T-cell (primary cell): ENCODE measurements at regions of chr1 and their contacts with region 1.

Region 1: DNA sequence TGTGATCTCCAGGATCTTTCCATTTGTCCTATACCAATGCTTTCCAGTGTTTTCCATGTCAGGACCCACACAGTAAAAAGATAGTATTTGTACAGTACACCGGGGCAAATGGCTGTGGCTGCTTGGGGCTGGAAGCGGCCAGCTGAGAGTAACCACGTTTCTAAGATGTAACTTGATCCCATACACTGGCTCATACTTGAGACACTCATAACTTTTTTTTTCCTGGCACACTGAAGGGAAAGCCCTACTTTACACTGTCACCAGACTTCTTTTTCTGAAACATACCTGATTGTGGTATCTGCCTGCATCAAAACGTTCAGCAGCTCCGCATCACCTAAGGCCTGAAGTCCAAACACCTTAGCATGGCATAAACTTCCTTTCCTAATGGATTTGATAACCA is 21.6 kb downstream of the VPS13D start:
- DNase-seq: no peak
- ATAC-seq: no peak
- H3K4me3 ChIP-seq: no peak overlapping the region
- H3K4me3 Mint-ChIP-seq: no peak overlapping the region
- H3K27ac ChIP-seq: no peak overlapping the region
- H3K27ac Mint-ChIP-seq: no peak overlapping the region
- H3K4me1 ChIP-seq: no peaks in the 10 kb centered on the region
- H3K4me1 Mint-ChIP-seq: no peaks in the 10 kb centered on the region
- H3K27me3 ChIP-seq: no peaks in the 10 kb centered on the region
- H3K27me3 Mint-ChIP-seq: no peaks in the 10 kb centered on the region

Region 2: GRCh38 chr1:12196641-12197482 is 54.6 kb before region 1 on chr1:
- CTCF ChIA-PET with region 1: no interaction called
- POLR2A ChIA-PET with region 1: no interaction called
- DNase-seq: peak in 1 of 35 experiments; percentile 48
- ATAC-seq: no peak
- H3K4me3 ChIP-seq: no peak overlapping the region
- H3K4me3 Mint-ChIP-seq: no peak overlapping the region
- H3K27ac ChIP-seq: no peak overlapping the region
- H3K27ac Mint-ChIP-seq: peak overlapping the region in 1 of 2 donors; percentile 39
- H3K4me1 ChIP-seq: peaks cover 2 to 55% of the 10 kb centered on the region in 2 experiments
- H3K4me1 Mint-ChIP-seq: peaks cover 6 to 37% (median 21%) of the 10 kb centered on the region in 3 donors
- H3K27me3 ChIP-seq: no peaks in the 10 kb centered on the region
- H3K27me3 Mint-ChIP-seq: no peaks in the 10 kb centered on the region

Region 3: GRCh38 chr1:12229835-12230548 is 21.4 kb before region 1 on chr1 and contains the start of gene VPS13D:
- CTCF ChIA-PET with region 1: no interaction called
- POLR2A ChIA-PET with region 1: interaction called in 1 of 2 experiments, 10 read pairs
- DNase-seq: peak; percentile 65 to 91 (median 79)
- ATAC-seq: peak; percentile 95 to 98 (median 97)
- H3K4me3 ChIP-seq: peak within 1 kb of the TSS; percentile 88 to 90
- H3K4me3 Mint-ChIP-seq: peak within 1 kb of the TSS; percentile 80 to 87 (median 82)
- H3K27ac ChIP-seq: no peak within 1 kb of the TSS
- H3K27ac Mint-ChIP-seq: peak within 1 kb of the TSS; percentile 55 to 73
- H3K4me1 ChIP-seq: peaks cover 5 to 22% of the 10 kb centered on the region in 2 experiments
- H3K4me1 Mint-ChIP-seq: peaks cover 16 to 28% (median 27%) of the 10 kb centered on the region in 3 donors
- H3K27me3 ChIP-seq: no peaks in the 10 kb centered on the region
- H3K27me3 Mint-ChIP-seq: no peaks in the 10 kb centered on the region
- total RNA-seq, gene VPS13D: 73.5 to 85.9 (median 75.8) TPM